ENCODE measurements at regions of chr9 and their contacts with region 1.

Region 1: GRCh38 chr9:68595868-68596267 is 55.2 kb upstream of the TMEM252 start:
- DNase-seq: no peak
- H3K4me3 ChIP-seq: no peak overlapping the region
- H3K27ac ChIP-seq: no peak overlapping the region
- H3K4me1 ChIP-seq: peaks cover 0 to 12% (median 0%) of the 10 kb centered on the region in 6 donors
- H3K27me3 ChIP-seq: no peaks in the 10 kb centered on the region
- CTCF ChIP-seq: no peak
- POLR2A ChIP-seq: no peak

Region 2: DNA sequence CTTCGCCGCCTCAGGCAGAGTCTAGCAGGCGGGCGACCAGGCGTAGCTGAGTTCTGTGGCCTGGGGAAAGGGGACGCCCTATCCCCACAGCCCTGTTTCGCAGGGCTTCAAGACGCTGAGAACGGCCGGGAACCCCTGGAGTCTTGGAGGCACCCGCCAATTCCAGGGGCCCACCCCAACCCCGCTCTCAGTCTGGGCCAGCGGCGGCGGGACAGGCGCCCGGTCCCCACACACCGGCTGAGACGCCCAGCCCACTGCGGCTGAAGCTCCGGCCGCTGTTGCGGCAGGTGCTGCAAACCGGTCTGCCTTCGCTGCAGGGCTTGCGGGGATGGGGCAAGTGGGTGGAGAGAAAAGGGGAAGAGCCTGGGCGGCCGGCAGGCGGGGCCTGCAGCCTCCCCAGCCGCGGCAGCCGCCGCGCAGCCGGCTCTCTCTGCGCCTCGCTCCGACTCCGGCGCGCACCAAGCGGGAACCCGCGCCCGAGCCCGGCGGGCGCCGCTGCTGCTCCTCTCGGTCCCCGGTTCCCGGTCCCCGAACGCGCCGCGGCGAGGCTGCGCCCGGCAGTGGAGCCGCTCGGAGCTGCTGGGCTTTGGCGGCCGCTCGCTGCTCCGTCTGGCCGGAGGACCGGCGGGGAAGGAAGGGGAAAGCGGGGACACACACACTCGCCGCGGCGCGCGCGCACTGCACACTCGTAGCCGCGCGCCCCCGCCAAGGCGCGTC is 109.1 kb after region 1 on chr9 and contains the start of gene PIP5K1B:
- intact Hi-C with region 1: loop called (anchors 10 kb)
- DNase-seq: peak; percentile 96
- H3K4me3 ChIP-seq: peak within 1 kb of the TSS; percentile 38 to 88 (median 72)
- H3K27ac ChIP-seq: peak within 1 kb of the TSS; percentile 68 to 92 (median 86)
- H3K4me1 ChIP-seq: peaks cover 11 to 58% (median 41%) of the 10 kb centered on the region in 6 donors
- H3K27me3 ChIP-seq: peaks cover 0 to 56% (median 24%) of the 10 kb centered on the region in 7 donors
- CTCF ChIP-seq: peak in 1 of 11 experiments; percentile 17
- POLR2A ChIP-seq: no peak
- total RNA-seq, gene PIP5K1B: 4.3 to 10.3 (median 8.0) TPM

Measured in spleen (tissue), 13 donors.